Dorsolateral prefrontal cortex (tissue), 120 donors: ENCODE measurements at regions of chr7 and their contacts with region 1.

Region 1: DNA sequence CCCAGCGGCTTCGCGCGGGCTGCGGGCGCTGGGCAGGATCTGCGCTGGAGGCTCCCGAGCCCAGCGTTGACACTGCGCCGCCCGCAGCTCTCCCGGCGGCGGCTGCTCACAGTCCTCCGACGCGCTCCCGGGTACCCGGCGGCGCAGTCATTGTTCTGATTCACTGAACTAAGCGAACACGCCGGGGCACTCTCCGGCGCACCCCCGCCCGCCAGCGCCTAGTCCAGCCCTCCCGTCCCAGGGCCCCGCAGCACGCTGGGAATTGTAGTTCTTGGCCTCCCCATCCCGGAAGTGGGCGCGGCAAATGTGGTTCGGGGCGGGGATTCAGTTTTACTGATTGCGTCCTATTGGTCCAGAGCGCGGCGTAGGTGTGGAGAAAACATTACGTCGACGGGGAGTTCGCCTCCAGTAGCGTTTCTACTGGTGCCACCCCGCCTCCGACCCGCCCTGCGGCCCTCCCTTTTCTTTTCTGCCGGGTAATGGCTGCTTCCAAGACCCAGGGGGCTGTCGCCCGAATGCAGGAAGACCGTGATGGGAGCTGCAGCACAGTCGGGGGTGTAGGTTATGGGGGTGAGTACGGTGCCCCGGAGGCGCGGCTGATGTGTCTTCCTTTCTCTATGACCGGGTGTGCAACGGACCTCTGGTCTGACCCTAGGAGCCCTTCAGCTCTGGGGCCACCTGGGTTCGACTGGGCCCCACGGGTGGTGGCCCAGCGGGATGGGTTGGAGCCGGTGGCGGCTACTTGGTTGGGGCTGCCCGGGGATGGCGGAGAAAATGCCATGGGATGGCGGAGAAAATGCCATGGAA is at the starts of genes DOCK4 and ZNF277:
- DNase-seq: peak; percentile 98 to 100 (median 99)
- H3K4me3 ChIP-seq: peak within 1 kb of the TSS; percentile 65 to 100 (median 94)
- H3K27ac ChIP-seq: peak within 1 kb of the TSS; percentile 70 to 99 (median 95)
- H3K27me3 ChIP-seq: no peaks in the 10 kb centered on the region
- CTCF ChIP-seq: peak in 32 of 56 donors; percentile 6 to 55 (median 28)
- total RNA-seq, gene DOCK4: 113 to 236 (median 152) TPM
- total RNA-seq, gene ZNF277: 14.7 to 33.1 (median 22.0) TPM

Region 2: GRCh38 chr7:111752022-111752582 is 454.3 kb before region 1 on chr7:
- intact Hi-C with region 1: loop called (anchors 5 to 10 kb)
- DNase-seq: peak in 8 of 10 donors; percentile 22 to 64 (median 56)
- H3K4me3 ChIP-seq: no peak overlapping the region
- H3K27ac ChIP-seq: peak overlapping the region in 21 of 59 donors; percentile 8 to 96 (median 90)
- H3K27me3 ChIP-seq: no peaks in the 10 kb centered on the region
- CTCF ChIP-seq: peak; percentile 53 to 84 (median 74)

Region 3: DNA sequence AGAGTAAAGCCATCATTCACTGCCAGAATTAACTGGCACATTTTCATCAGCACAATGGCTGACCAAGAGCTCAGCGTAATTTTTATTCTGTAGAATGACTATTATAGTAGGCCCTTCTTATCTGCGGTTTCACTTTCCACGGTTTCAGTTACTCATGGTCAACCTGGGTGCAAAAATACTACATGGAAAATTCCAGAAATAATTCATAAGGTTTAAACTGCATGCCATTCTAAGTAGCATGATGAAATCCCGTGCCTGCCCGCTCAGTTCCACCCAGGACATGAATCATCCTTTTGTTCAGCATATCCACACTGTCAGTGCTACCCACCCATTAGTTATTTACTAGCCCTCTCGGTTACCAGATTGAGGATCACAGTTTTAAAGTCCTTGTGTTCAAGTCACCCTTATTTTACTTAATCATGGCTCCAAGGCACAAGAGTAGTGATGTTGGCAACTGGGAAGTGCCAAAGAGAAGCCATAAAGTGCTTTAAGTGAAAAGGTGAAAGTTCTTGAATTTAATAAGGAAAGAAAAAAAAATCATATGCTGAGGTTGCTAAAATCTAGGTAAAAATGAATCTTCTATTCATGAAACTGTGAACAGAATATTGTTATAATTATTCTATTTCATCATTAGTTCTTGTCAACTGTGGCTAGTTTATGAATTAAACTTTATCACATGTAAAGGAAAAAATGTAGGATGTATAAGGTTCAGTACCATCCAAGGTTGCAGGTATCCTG is 205.2 kb before region 1 on chr7:
- intact Hi-C with region 1: loop called in 1 of 2 experiments (anchors 10 kb)
- DNase-seq: peak in 3 of 10 donors; percentile 43 to 57 (median 53)
- H3K4me3 ChIP-seq: peak overlapping the region in 29 of 59 donors; percentile 0 to 53 (median 26)
- H3K27ac ChIP-seq: peak overlapping the region in 55 of 59 donors; percentile 12 to 93 (median 75)
- H3K27me3 ChIP-seq: no peaks in the 10 kb centered on the region
- CTCF ChIP-seq: no peak

Region 4: GRCh38 chr7:112112822-112113255 is 93.6 kb before region 1 on chr7:
- intact Hi-C with region 1: loop called (anchors 1 to 2 kb)
- DNase-seq: peak in 1 of 10 donors; percentile 59
- H3K4me3 ChIP-seq: peak overlapping the region in 36 of 59 donors; percentile 0 to 52 (median 18)
- H3K27ac ChIP-seq: peak overlapping the region; percentile 72 to 99 (median 94)
- H3K27me3 ChIP-seq: no peaks in the 10 kb centered on the region
- CTCF ChIP-seq: peak in 1 of 56 donors; percentile 15

Region 5: DNA sequence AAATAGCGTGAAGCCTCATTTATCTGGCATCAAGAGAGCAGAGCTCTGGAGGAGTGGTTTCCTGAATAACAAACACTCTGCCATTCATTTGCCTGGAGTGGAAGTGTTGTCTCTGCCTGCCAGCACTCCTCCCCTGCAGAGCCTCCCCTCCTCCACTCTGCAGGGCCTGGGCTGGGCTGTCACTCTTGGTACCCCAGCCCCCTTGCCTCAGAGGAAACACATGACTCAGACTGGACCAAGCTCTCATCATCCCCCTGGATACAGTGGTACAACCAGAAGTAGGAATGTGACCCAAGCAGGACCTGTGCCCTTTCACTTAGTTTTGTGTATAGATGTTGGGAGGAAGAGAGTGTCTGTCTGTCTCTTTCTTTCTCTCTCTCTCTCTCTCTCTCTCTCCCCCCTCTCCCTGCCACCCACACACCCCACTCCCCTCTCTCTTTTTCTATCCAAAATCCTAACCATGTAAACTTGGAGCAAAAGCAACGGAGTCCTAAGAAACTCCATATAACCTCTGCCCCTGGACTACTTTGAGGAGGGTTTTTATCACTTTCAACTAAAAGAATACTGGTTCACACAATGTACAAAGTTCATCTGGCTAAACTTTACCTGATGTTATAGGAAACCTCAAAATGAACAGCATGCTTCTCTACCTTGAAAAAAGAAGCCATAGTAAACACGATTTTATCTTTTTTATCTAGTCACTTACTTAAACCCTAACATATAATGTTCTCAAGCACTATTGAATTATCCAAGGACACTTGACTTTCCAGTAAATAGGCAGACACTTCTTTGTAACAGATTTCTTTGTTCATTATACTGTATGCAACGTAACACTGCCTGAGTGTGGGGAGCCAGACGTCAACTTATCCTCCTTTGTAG is 44.1 kb before region 1 on chr7:
- intact Hi-C with region 1: loop called (anchors 5 kb)
- DNase-seq: peak; percentile 23 to 76 (median 70)
- H3K4me3 ChIP-seq: peak overlapping the region in 12 of 59 donors; percentile 0 to 43 (median 9)
- H3K27ac ChIP-seq: peak overlapping the region; percentile 21 to 88 (median 73)
- H3K27me3 ChIP-seq: no peaks in the 10 kb centered on the region
- CTCF ChIP-seq: peak in 6 of 56 donors; percentile 10 to 41 (median 15)

Region 6: GRCh38 chr7:112302566-112302965 is 96.1 kb after region 1 on chr7:
- intact Hi-C with region 1: no loop called
- DNase-seq: no peak
- H3K4me3 ChIP-seq: no peak overlapping the region
- H3K27ac ChIP-seq: no peak overlapping the region
- H3K27me3 ChIP-seq: no peaks in the 10 kb centered on the region
- CTCF ChIP-seq: no peak

Region 7: GRCh38 chr7:112398534-112398933 is 192.1 kb after region 1 on chr7:
- intact Hi-C with region 1: loop called in 1 of 2 experiments (anchors 10 kb)
- DNase-seq: no peak
- H3K4me3 ChIP-seq: no peak overlapping the region
- H3K27ac ChIP-seq: no peak overlapping the region
- H3K27me3 ChIP-seq: no peaks in the 10 kb centered on the region
- CTCF ChIP-seq: no peak

Region 8: DNA sequence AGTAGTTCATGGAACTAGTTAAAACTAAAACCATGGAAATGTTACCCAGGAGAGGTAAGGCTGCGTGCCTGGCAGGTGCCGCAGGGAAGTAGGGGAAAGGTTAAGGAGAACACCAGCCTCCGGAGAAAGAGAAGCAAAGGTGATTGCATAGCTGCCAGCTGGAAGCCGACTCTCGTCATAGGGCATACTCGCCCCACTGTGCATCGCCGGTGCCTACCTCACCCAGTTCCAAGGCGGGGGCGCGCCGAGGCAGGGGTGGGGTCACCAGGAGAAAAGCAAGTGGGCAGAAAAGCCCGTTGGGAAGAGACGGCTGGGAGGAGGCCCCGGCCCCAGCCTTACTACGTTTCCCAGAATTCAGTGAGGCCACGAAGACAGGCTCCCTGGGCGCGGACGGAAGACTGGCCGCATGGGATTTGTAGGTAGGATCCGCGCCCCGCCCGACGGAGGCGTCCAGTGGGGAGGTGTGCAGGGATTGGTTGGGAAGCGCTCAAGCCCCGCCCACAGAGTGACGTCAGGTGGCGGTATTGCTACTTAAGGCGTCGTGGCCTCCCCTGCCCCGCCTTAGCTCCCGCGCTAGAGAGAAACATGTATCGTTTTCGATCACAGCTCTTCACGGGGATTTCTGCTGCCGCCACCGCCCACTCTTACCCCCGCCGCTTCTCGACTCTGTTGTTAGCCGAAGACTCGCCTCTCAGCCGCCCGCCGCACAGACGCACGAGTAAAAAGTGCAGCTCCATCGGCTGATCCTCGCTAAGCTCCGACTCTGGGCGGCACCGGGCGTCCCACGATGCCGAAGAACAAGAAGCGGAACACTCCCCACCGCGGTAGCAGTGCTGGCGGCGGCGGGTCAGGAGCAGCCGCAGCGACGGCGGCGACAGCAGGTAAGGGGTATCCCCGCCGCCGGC is 243.7 kb after region 1 on chr7 and contains the start of gene IFRD1:
- intact Hi-C with region 1: loop called in 1 of 2 experiments (anchors 2 kb)
- DNase-seq: peak; percentile 99 to 100 (median 100)
- H3K4me3 ChIP-seq: peak within 1 kb of the TSS; percentile 64 to 100 (median 97)
- H3K27ac ChIP-seq: peak within 1 kb of the TSS; percentile 54 to 99 (median 96)
- H3K27me3 ChIP-seq: no peaks in the 10 kb centered on the region
- CTCF ChIP-seq: peak in 19 of 56 donors; percentile 5 to 39 (median 16)
- total RNA-seq, gene IFRD1: 39.0 to 110 (median 58.1) TPM